Psoas muscle (tissue), 8 donors: ENCODE measurements at regions of chr11 and their contacts with region 1.

Region 1: GRCh38 chr11:44036811-44037657 is 10.7 kb upstream of the ACCSL start:
- DNase-seq: peak; percentile 77 to 83
- ATAC-seq: peak; percentile 81 to 89 (median 84)
- H3K4me3 ChIP-seq: no peak overlapping the region
- H3K27ac ChIP-seq: no peak overlapping the region
- H3K4me1 ChIP-seq: peaks cover 6% of the 10 kb centered on the region
- H3K27me3 ChIP-seq: no peaks in the 10 kb centered on the region
- CTCF ChIP-seq: peak; percentile 76

Region 2: GRCh38 chr11:43567396-43567975 is 469.5 kb before region 1 on chr11:
- intact Hi-C with region 1: no loop called
- DNase-seq: no peak
- ATAC-seq: peak in 2 of 4 donors; percentile 34 to 62
- H3K4me3 ChIP-seq: no peak overlapping the region
- H3K27ac ChIP-seq: no peak overlapping the region
- H3K4me1 ChIP-seq: no peaks in the 10 kb centered on the region
- H3K27me3 ChIP-seq: peaks cover 0 to 24% (median 6%) of the 10 kb centered on the region in 3 donors
- CTCF ChIP-seq: peak; percentile 60

Region 3: DNA sequence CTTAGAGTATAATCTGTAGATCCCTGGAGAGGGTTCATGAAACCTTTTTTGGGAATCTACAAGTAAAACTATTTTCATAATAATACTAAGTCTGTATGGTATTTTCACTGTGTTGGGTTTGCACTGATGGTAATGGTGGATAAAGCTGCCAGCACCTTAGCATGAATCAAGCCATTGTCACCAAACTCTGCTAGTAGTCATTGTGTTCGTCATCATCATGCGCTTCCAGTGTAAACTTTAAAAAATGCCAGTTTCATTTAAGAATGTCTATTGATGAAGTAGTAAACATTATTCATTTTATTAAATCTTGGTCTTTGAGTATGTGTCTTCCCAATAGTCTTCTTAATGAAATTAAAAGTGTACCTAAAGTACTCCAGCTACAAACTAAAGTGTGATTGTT is 141.4 kb before region 1 on chr11:
- intact Hi-C with region 1: loop called (anchors 2 to 5 kb)
- DNase-seq: no peak
- ATAC-seq: no peak
- H3K4me3 ChIP-seq: no peak overlapping the region
- H3K27ac ChIP-seq: no peak overlapping the region
- H3K4me1 ChIP-seq: no peaks in the 10 kb centered on the region
- H3K27me3 ChIP-seq: no peaks in the 10 kb centered on the region
- CTCF ChIP-seq: no peak